ENCODE measurements at regions of chr4 and their contacts with region 1.

Region 1: DNA sequence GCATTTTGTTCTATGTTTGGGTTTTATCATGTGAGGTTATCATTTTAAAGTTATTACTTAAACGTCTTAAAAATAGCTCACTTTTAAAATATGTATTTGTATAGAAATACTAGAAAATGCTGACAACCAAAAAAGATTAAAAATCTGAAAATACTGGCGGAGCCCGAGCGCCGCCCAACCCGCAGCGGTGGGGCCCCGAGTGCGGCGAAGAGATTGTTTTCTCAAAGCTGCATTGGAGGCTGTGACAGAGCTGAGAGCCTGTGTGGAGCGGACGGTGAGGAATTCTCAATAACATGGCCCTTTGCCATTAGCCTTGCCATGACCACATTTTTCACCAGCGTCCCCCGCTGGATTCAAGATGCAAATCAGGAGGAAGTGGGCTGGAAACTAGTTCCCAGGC is 255.4 kb downstream of the NKX6-1 start:
- DNase-seq: no peak
- ATAC-seq: no peak
- H3K4me3 ChIP-seq: no peak overlapping the region
- H3K27ac ChIP-seq: no peak overlapping the region
- H3K4me1 ChIP-seq: peaks cover 0 to 6% of the 10 kb centered on the region in 2 experiments; a peak in 2 of 5 replicates
- H3K27me3 ChIP-seq: no peaks in the 10 kb centered on the region
- CTCF ChIP-seq: no peak
- EP300 ChIP-seq: no peak
- POLR2A ChIP-seq: no peak
- RAD21 ChIP-seq: no peak

Region 2: DNA sequence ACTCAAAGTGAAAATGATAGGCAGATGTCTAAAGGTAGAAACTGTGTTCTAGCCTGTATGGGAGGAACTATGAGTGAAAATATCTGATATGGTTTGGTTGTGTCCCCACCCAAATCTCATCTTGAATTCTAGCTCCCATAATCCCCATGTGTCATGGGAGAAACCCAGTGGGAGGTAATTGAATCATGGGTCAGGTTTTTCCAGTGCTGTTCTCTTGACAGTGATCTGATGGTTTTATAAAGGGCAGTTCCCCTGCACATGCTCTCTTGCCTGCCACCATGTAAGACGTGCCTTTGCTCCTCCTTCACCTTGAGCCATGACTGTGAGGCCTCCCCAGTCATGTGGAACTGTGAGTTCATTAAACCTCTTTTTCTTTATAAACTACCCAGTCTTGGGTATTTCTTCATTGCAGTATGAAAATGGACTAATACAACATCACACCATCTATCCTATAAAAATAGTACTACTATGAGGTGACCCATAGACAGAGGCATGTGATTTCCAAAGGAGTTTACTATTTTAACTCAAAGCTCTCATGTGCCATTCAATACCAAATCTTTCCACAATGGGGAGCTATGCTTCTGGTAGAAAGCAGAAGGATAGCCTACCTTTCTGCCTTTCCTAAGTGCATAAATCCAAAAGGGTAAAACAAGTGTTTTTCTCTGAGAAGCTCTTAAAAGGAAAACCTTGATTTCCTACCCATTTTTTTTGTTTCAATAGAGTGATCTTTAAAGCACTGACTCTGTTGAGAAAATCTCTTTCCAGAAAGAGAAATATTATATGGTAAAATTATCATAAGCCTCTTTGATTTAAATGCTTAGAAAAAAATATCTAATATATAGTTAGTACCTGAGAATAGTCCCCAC is 1391.6 kb before region 1 on chr4:
- CTCF ChIA-PET with region 1: no interaction called
- POLR2A ChIA-PET with region 1: no interaction called
- in situ Hi-C with region 1: no loop called
- intact Hi-C with region 1: no loop called
- DNase-seq: peak in 3 of 4 experiments; percentile 17 to 40 (median 22)
- ATAC-seq: peak; percentile 84
- H3K4me3 ChIP-seq: no peak overlapping the region
- H3K27ac ChIP-seq: no peak overlapping the region
- H3K4me1 ChIP-seq: no peaks in the 10 kb centered on the region
- H3K27me3 ChIP-seq: no peaks in the 10 kb centered on the region
- CTCF ChIP-seq: peak; percentile 28 to 46 (median 44); a peak in 5 of 6 replicates
- EP300 ChIP-seq: no peak
- POLR2A ChIP-seq: no peak
- RAD21 ChIP-seq: peak in 1 of 2 experiments; percentile 51; a peak in 2 of 4 replicates

Region 3: DNA sequence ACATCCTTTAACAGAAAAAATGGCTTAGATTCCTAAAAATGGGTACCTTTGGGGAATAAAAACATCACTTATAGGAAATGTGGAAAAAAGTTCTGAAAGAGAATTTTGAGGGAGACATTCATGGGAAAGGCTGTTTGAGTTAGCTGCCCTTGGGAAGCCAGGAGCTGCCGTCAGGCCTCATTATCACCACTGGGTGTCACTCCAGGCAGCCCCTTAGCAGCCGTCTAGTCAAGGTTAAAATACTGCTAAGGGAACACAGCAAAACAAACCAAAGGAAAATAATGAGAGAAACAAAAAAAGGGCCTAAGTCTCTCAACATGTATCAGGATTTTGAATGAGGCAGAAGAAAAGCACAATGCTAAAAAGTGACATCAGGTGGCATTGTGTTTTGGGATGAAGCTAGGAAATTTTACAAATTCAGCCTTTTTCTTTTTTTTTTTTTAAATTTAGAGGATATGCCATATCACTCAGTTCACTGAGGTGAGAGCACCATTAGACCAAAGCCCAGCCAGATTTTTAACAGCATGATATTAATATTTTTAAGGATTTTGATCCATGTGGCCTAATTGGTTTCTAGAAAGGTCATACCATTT is 472.5 kb before region 1 on chr4:
- CTCF ChIA-PET with region 1: no interaction called
- POLR2A ChIA-PET with region 1: no interaction called
- in situ Hi-C with region 1: no loop called
- intact Hi-C with region 1: loop called (anchors 5 kb)
- DNase-seq: peak; percentile 25 to 50 (median 38)
- ATAC-seq: peak; percentile 91
- H3K4me3 ChIP-seq: no peak overlapping the region
- H3K27ac ChIP-seq: no peak overlapping the region
- H3K4me1 ChIP-seq: no peaks in the 10 kb centered on the region
- H3K27me3 ChIP-seq: no peaks in the 10 kb centered on the region
- CTCF ChIP-seq: peak; percentile 48 to 69 (median 68)
- EP300 ChIP-seq: no peak
- POLR2A ChIP-seq: no peak
- RAD21 ChIP-seq: peak; percentile 71 to 73

Region 4: DNA sequence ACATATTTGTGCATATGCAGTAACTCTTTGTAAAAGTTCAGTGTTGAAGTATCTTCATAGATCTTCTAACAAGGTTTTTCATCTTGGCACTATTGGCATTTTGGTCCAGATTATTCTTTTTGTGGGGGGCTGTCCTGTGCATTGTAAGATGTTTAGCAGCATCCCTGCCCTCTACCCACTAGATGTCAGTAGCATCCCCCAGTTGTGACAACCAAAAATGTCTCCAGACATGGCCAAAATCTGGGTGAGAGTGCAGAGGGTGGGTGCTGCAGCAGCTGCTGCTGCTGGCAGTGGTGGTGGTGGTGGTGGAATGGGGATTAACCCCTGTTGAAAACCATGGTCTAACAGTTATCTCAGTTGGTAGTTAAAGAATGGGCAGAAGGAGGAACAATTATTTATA is 337.7 kb before region 1 on chr4:
- CTCF ChIA-PET with region 1: interaction called, 3 read pairs
- POLR2A ChIA-PET with region 1: no interaction called
- in situ Hi-C with region 1: no loop called
- intact Hi-C with region 1: loop called (anchors 5 kb)
- DNase-seq: peak in 1 of 4 experiments; percentile 26
- ATAC-seq: peak; percentile 73
- H3K4me3 ChIP-seq: no peak overlapping the region
- H3K27ac ChIP-seq: no peak overlapping the region
- H3K4me1 ChIP-seq: no peaks in the 10 kb centered on the region
- H3K27me3 ChIP-seq: no peaks in the 10 kb centered on the region
- CTCF ChIP-seq: peak; percentile 46 to 57 (median 51); a peak in 4 of 6 replicates
- EP300 ChIP-seq: no peak
- POLR2A ChIP-seq: no peak
- RAD21 ChIP-seq: peak; percentile 67 to 68

Measured in K562 (cell line).